ENCODE measurements at regions of chr7 and their contacts with region 1.

Region 1: GRCh38 chr7:5596046-5596895 is 172.6 kb upstream of the TNRC18 start:
- DNase-seq: peak; percentile 95
- ATAC-seq: peak; percentile 54
- H3K4me3 ChIP-seq: peak overlapping the region; percentile 84
- H3K27ac ChIP-seq: peak overlapping the region; percentile 94
- H3K4me1 ChIP-seq: peaks cover 31% of the 10 kb centered on the region
- H3K27me3 ChIP-seq: no peaks in the 10 kb centered on the region
- CTCF ChIP-seq: no peak
- POLR2A ChIP-seq: peak; percentile 11; the same call in 1 of the 2 replicates
- RAD21 ChIP-seq: no peak

Region 2: GRCh38 chr7:5607951-5608656 is 11.8 kb after region 1 on chr7:
- CTCF ChIA-PET with region 1: interaction called, 3 read pairs
- POLR2A ChIA-PET with region 1: interaction called, 13 read pairs
- dilution Hi-C with region 1: no loop called
- in situ Hi-C with region 1: no loop called
- intact Hi-C with region 1: no loop called
- DNase-seq: no peak
- ATAC-seq: peak; percentile 2
- H3K4me3 ChIP-seq: no peak overlapping the region
- H3K27ac ChIP-seq: no peak overlapping the region
- H3K4me1 ChIP-seq: 0 out of 2 replicates have a peak, but pooled peaks cover 2% of the 10 kb centered on the region
- H3K27me3 ChIP-seq: no peaks in the 10 kb centered on the region
- CTCF ChIP-seq: no peak
- POLR2A ChIP-seq: no peak
- RAD21 ChIP-seq: no peak

Region 3: DNA sequence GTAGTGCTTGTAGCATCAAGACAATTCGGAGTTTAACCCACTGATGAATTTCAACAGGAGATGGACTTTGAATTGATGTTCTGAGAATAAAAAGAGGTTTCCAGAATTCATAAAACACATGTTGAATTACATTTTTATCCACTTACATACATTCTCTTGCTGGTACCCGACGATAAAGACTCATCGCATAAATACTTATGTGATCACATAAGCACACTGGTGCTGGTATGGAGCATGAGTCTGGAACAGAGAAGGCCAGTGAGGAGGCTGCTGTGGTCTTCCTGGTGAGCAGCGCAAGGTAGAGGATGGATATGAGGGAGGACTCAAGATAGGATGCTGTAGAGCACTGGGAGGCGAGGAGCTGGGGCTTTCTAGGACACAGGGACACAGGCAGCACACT is 76.2 kb after region 1 on chr7:
- CTCF ChIA-PET with region 1: no interaction called
- POLR2A ChIA-PET with region 1: interaction called, 13 read pairs
- dilution Hi-C with region 1: no loop called
- in situ Hi-C with region 1: no loop called
- intact Hi-C with region 1: no loop called
- DNase-seq: peak; percentile 77
- ATAC-seq: peak; percentile 68
- H3K4me3 ChIP-seq: no peak overlapping the region
- H3K27ac ChIP-seq: peak overlapping the region; percentile 98; the same call in 1 of the 2 replicates
- H3K4me1 ChIP-seq: peaks cover 26% of the 10 kb centered on the region
- H3K27me3 ChIP-seq: no peaks in the 10 kb centered on the region
- CTCF ChIP-seq: no peak
- POLR2A ChIP-seq: no peak
- RAD21 ChIP-seq: no peak